Caco-2 (cell line): ENCODE measurements at regions of chr17 and their contacts with region 1.

Region 1: GRCh38 chr17:19447085-19447583 is 36.1 kb downstream of the RNF112 start:
- DNase-seq: peak; percentile 60 to 86
- H3K4me3 ChIP-seq: no peak overlapping the region
- H3K4me3 Mint-ChIP-seq: no peak overlapping the region
- H3K27ac Mint-ChIP-seq: no peak overlapping the region
- H3K4me1 ChIP-seq: peaks cover 10% of the 10 kb centered on the region; the same call in 1 of the 2 replicates
- H3K4me1 Mint-ChIP-seq: peaks cover 8% of the 10 kb centered on the region
- H3K27me3 ChIP-seq: no peaks in the 10 kb centered on the region
- H3K27me3 Mint-ChIP-seq: peaks cover 3% of the 10 kb centered on the region
- CTCF ChIP-seq: peak; percentile 87 to 96

Region 2: DNA sequence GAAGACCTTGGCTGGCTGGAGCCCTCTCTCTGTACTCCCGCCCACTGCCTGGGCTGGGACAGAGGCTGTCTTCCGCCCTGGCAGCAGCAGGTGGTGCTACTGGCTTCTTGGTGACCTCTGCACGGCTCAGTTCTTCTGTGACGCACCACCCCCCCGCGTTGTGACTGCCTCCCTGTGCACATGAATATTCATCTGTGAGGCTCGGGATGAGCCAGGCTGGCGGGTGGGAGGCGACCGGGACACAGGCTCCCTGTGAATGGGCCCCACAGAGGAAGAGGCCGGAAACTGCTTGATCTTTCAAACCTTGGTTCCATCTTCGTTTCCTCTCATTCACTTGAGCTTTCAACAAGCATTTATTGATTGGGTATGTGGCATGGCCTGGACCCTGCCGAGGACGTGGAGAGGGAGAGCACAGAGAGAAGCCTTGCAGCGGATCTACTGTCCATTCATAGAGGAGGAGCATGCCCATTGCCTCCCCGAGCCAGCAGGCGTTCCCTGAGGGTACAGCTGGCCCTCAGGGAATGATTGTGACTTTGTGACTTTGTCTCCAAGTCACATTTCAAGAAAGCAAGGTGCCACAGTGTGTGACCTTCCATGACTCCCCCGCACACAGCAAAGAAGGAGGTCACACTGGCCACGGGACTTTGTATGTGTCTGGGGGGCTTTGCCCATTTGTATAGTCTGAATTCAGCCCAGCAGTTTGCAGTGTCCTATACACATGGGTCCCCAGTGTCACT is 129.6 kb before region 1 on chr17:
- CTCF ChIA-PET with region 1: no interaction called
- POLR2A ChIA-PET with region 1: no interaction called
- intact Hi-C with region 1: loop called (anchors 1 kb)
- DNase-seq: peak in 1 of 2 experiments; percentile 53
- H3K4me3 ChIP-seq: no peak overlapping the region
- H3K4me3 Mint-ChIP-seq: no peak overlapping the region
- H3K27ac Mint-ChIP-seq: no peak overlapping the region
- H3K4me1 ChIP-seq: no peaks in the 10 kb centered on the region
- H3K4me1 Mint-ChIP-seq: no peaks in the 10 kb centered on the region
- H3K27me3 ChIP-seq: no peaks in the 10 kb centered on the region
- H3K27me3 Mint-ChIP-seq: no peaks in the 10 kb centered on the region
- CTCF ChIP-seq: peak in 1 of 2 experiments; percentile 51

Region 3: GRCh38 chr17:19362277-19363113 is 84.6 kb before region 1 on chr17 and contains the start of gene B9D1:
- CTCF ChIA-PET with region 1: interaction called, 44 read pairs
- POLR2A ChIA-PET with region 1: no interaction called
- intact Hi-C with region 1: loop called (anchors 1 kb)
- DNase-seq: peak; percentile 93 to 94
- H3K4me3 ChIP-seq: peak within 1 kb of the TSS; percentile 81
- H3K4me3 Mint-ChIP-seq: peak within 1 kb of the TSS; percentile 80
- H3K27ac Mint-ChIP-seq: peak within 1 kb of the TSS; percentile 68
- H3K4me1 ChIP-seq: peaks cover 6% of the 10 kb centered on the region
- H3K4me1 Mint-ChIP-seq: no peaks in the 10 kb centered on the region
- H3K27me3 ChIP-seq: no peaks in the 10 kb centered on the region
- H3K27me3 Mint-ChIP-seq: no peaks in the 10 kb centered on the region
- CTCF ChIP-seq: peak; percentile 94 to 98
- total RNA-seq, gene B9D1: 8.1 and 11.5 TPM in 2 replicates

Region 4: GRCh38 chr17:19377602-19378392 is 69.3 kb before region 1 on chr17:
- CTCF ChIA-PET with region 1: interaction called, 9 read pairs
- POLR2A ChIA-PET with region 1: interaction called, 3 read pairs
- intact Hi-C with region 1: loop called (anchors 5 kb)
- DNase-seq: peak; percentile 99
- H3K4me3 ChIP-seq: peak overlapping the region; percentile 80
- H3K4me3 Mint-ChIP-seq: peak overlapping the region; percentile 99
- H3K27ac Mint-ChIP-seq: peak overlapping the region; percentile 96
- H3K4me1 ChIP-seq: peaks cover 11% of the 10 kb centered on the region
- H3K4me1 Mint-ChIP-seq: peaks cover 6% of the 10 kb centered on the region
- H3K27me3 ChIP-seq: no peaks in the 10 kb centered on the region
- H3K27me3 Mint-ChIP-seq: no peaks in the 10 kb centered on the region
- CTCF ChIP-seq: peak in 1 of 2 experiments; percentile 4

Region 5: DNA sequence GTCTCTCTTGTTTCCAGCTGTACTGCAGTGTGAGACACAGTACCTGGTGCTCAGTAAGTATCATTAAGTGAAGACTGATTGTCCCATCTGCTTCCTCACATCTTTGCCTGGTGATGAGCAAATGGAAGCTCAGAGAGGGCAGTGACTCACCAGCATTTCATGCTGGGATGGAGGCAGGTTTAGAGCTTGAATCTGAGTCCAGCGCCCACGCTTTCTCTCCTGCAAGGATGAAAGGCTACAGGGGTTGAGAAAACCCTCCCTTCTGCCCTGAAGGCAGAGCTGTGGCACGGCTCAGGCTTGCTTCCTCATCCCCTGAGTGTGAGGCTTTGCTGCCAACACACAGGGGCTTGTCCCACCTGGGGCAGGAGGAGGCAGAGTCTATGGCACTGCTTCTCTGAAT is 37.6 kb before region 1 on chr17:
- CTCF ChIA-PET with region 1: no interaction called
- POLR2A ChIA-PET with region 1: no interaction called
- intact Hi-C with region 1: loop called (anchors 5 kb)
- DNase-seq: peak in 1 of 2 experiments; percentile 28
- H3K4me3 ChIP-seq: no peak overlapping the region
- H3K4me3 Mint-ChIP-seq: no peak overlapping the region
- H3K27ac Mint-ChIP-seq: no peak overlapping the region
- H3K4me1 ChIP-seq: no peaks in the 10 kb centered on the region
- H3K4me1 Mint-ChIP-seq: peaks cover 6% of the 10 kb centered on the region
- H3K27me3 ChIP-seq: no peaks in the 10 kb centered on the region
- H3K27me3 Mint-ChIP-seq: no peaks in the 10 kb centered on the region
- CTCF ChIP-seq: no peak